HCT116 (cell line): ENCODE measurements at regions of chr3 and their contacts with region 1.

Region 1: GRCh38 chr3:88219138-88219792 is 69.5 kb downstream of the C3orf38 start:
- DNase-seq: no peak
- ATAC-seq: peak; percentile 81
- H3K4me3 ChIP-seq: no peak overlapping the region
- H3K27ac ChIP-seq: no peak overlapping the region
- H3K4me1 ChIP-seq: no peaks in the 10 kb centered on the region
- H3K27me3 ChIP-seq: no peaks in the 10 kb centered on the region
- CTCF ChIP-seq: peak; percentile 8 to 63 (median 52); a peak in 4 of 6 replicates
- POLR2A ChIP-seq: no peak
- RAD21 ChIP-seq: peak; percentile 54

Region 2: GRCh38 chr3:89098964-89099585 is 879.8 kb after region 1 on chr3:
- CTCF ChIA-PET with region 1: no interaction called
- POLR2A ChIA-PET with region 1: no interaction called
- RAD21 ChIA-PET with region 1: no interaction called
- intact Hi-C with region 1: loop called (anchors 1 kb)
- DNase-seq: peak; percentile 7
- ATAC-seq: 0 out of 2 replicates have a peak, but pooled peaks have one; percentile 38
- H3K4me3 ChIP-seq: no peak overlapping the region
- H3K27ac ChIP-seq: no peak overlapping the region
- H3K4me1 ChIP-seq: no peaks in the 10 kb centered on the region
- H3K27me3 ChIP-seq: no peaks in the 10 kb centered on the region
- CTCF ChIP-seq: peak in 2 of 3 experiments; percentile 70 to 73; a peak in 4 of 6 replicates
- POLR2A ChIP-seq: no peak
- RAD21 ChIP-seq: peak; percentile 26; the same call in 1 of the 2 replicates

Region 3: GRCh38 chr3:90091204-90091924 is 1872.1 kb after region 1 on chr3:
- CTCF ChIA-PET with region 1: no interaction called
- POLR2A ChIA-PET with region 1: no interaction called
- RAD21 ChIA-PET with region 1: no interaction called
- intact Hi-C with region 1: loop called (anchors 5 kb)
- DNase-seq: no peak
- ATAC-seq: no peak
- H3K4me3 ChIP-seq: no peak overlapping the region
- H3K27ac ChIP-seq: no peak overlapping the region
- H3K4me1 ChIP-seq: no peaks in the 10 kb centered on the region
- H3K27me3 ChIP-seq: no peaks in the 10 kb centered on the region
- CTCF ChIP-seq: 0 out of 6 replicates have a peak, but pooled peaks of 2 of the 3 experiments have one; percentile 11 to 18
- POLR2A ChIP-seq: no peak
- RAD21 ChIP-seq: 0 out of 2 replicates have a peak, but pooled peaks have one; percentile 3

Region 4: DNA sequence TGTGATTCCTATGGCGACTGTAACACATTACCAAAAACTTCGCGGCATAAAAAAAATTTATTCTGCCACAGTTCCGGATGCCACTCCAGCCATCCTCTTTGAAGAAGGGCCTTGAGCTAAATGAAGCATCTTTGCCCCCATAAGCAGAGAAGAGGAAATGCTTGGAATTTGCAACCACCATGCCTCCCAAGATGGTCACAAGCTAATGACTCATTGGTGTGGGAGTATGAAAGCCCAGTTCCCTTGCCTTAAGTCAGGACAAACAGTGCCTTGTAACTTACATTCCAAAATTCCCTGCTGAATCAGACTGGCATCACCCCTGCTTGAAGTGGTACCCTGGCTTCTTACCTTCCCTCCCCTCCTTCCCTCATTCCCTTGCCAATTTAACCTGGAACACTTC is 1965.6 kb after region 1 on chr3:
- CTCF ChIA-PET with region 1: no interaction called
- POLR2A ChIA-PET with region 1: no interaction called
- RAD21 ChIA-PET with region 1: interaction called in 1 of 2 experiments, 3 read pairs
- intact Hi-C with region 1: loop called (anchors 5 kb)
- DNase-seq: no peak
- ATAC-seq: no peak
- H3K4me3 ChIP-seq: no peak overlapping the region
- H3K27ac ChIP-seq: no peak overlapping the region
- H3K4me1 ChIP-seq: no peaks in the 10 kb centered on the region
- H3K27me3 ChIP-seq: no peaks in the 10 kb centered on the region
- CTCF ChIP-seq: no peak
- POLR2A ChIP-seq: no peak
- RAD21 ChIP-seq: no peak